ENCODE measurements at regions of chr16 and their contacts with region 1.

Region 1: GRCh38 chr16:69930117-69930776 is 20.9 kb upstream of the CLEC18A start:
- DNase-seq: peak; percentile 60
- ATAC-seq: peak; percentile 93
- H3K4me3 ChIP-seq: no peak overlapping the region
- H3K27ac ChIP-seq: no peak overlapping the region
- H3K4me1 ChIP-seq: peaks cover 6% of the 10 kb centered on the region
- H3K27me3 ChIP-seq: no peaks in the 10 kb centered on the region
- CTCF ChIP-seq: peak; percentile 74
- POLR2A ChIP-seq: no peak
- RAD21 ChIP-seq: peak; percentile 89

Region 2: GRCh38 chr16:69542974-69543373 is 387.3 kb before region 1 on chr16:
- CTCF ChIA-PET with region 1: no interaction called
- POLR2A ChIA-PET with region 1: no interaction called
- dilution Hi-C with region 1: no loop called
- in situ Hi-C with region 1: no loop called
- intact Hi-C with region 1: no loop called
- DNase-seq: peak; percentile 40
- ATAC-seq: no peak
- H3K4me3 ChIP-seq: no peak overlapping the region
- H3K27ac ChIP-seq: no peak overlapping the region
- H3K4me1 ChIP-seq: peaks cover 3% of the 10 kb centered on the region
- H3K27me3 ChIP-seq: no peaks in the 10 kb centered on the region
- CTCF ChIP-seq: no peak
- POLR2A ChIP-seq: no peak
- RAD21 ChIP-seq: no peak

Region 3: DNA sequence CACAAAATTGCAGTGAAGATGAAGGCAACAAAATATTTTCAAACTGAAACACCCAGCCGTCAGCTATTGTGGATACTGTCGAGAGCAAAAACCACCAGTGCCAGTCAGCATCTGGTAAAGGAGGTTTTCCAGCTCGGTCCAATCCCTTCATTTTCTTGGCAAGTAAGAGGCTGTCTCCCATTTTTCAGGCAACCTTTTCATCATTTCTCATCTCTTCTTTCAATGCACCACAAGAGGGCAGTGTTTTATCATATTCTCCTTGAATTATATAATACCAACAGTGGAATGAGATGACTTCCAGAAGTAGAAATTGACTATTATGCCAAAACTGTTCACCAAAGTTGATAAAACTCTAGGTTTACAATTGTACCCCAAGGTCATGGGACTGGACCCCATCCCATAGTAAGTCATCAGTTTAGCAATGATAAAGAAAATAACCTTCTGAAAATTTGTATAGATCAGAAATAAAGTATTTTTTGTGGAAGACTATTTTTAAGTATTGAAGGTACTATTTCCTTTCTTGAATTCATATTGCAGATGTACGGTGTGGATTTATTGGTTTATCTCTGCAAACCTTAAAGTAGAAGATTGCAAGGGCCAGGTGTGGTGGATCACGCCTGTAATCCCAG is 220.7 kb before region 1 on chr16:
- CTCF ChIA-PET with region 1: no interaction called
- POLR2A ChIA-PET with region 1: no interaction called
- dilution Hi-C with region 1: no loop called
- in situ Hi-C with region 1: no loop called
- intact Hi-C with region 1: loop called (anchors 5 kb)
- DNase-seq: peak; percentile 73
- ATAC-seq: peak; percentile 22; the same call in 1 of the 2 replicates
- H3K4me3 ChIP-seq: no peak overlapping the region
- H3K27ac ChIP-seq: no peak overlapping the region
- H3K4me1 ChIP-seq: peaks cover 4% of the 10 kb centered on the region; the same call in 1 of the 2 replicates
- H3K27me3 ChIP-seq: no peaks in the 10 kb centered on the region
- CTCF ChIP-seq: peak; percentile 69
- POLR2A ChIP-seq: no peak
- RAD21 ChIP-seq: peak; percentile 64

Region 4: GRCh38 chr16:69796351-69797118 is 133.7 kb before region 1 on chr16:
- CTCF ChIA-PET with region 1: interaction called, 21 read pairs
- POLR2A ChIA-PET with region 1: no interaction called
- dilution Hi-C with region 1: no loop called
- in situ Hi-C with region 1: loop called (anchors 5 kb)
- intact Hi-C with region 1: loop called (anchors 1 kb)
- DNase-seq: peak; percentile 77
- ATAC-seq: peak; percentile 94
- H3K4me3 ChIP-seq: no peak overlapping the region
- H3K27ac ChIP-seq: no peak overlapping the region
- H3K4me1 ChIP-seq: peaks cover 10% of the 10 kb centered on the region
- H3K27me3 ChIP-seq: no peaks in the 10 kb centered on the region
- CTCF ChIP-seq: peak; percentile 94
- POLR2A ChIP-seq: no peak
- RAD21 ChIP-seq: peak; percentile 96